ENCODE measurements at regions of chr10 and their contacts with region 1.

Region 1: DNA sequence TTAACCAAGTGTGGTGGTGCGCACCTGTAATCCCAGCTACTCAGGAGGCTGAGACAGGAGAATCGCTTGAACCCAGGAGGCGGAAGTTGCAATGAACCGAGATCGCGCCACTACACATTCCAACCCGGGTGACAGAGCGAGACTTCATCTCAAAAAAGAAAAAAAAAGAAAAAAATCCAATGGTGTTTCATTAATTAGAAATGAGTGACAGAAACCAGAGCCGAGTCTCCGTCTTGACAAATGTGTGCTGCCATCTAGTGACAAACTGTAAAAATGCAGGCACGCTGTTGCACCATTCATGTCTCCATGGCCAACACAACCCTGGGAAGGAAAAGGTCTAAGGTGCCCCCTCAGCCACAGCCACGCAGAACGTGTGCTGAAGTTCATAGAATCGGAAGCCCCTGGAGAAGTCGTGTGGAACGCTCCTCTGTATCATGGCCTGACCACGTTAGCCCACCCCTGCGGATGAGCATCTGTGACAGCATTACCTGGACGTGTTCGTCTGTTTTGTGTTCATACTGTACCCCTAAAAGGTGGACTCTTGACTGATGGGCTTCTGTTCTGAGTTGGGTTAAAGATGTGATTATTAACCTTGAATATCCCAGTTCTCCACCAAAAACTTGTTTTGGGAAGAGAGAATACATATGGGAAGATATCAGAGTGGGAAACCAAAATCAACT is 94.9 kb downstream of the LYZL2 start:
- DNase-seq: peak; percentile 87
- H3K4me3 ChIP-seq: no peak overlapping the region
- H3K27ac ChIP-seq: no peak overlapping the region
- H3K4me1 ChIP-seq: peaks cover 26% of the 10 kb centered on the region
- CTCF ChIP-seq: peak; percentile 90

Region 2: GRCh38 chr10:30392564-30392990 is 142.0 kb before region 1 on chr10:
- CTCF ChIA-PET with region 1: interaction called, 3 read pairs
- POLR2A ChIA-PET with region 1: interaction called, 5 read pairs
- intact Hi-C with region 1: loop called (anchors 1 kb)
- DNase-seq: peak; percentile 74
- H3K4me3 ChIP-seq: no peak overlapping the region
- H3K27ac ChIP-seq: no peak overlapping the region
- H3K4me1 ChIP-seq: no peaks in the 10 kb centered on the region
- CTCF ChIP-seq: peak; percentile 93

Region 3: GRCh38 chr10:30413996-30414576 is 120.5 kb before region 1 on chr10:
- CTCF ChIA-PET with region 1: interaction called, 4 read pairs
- POLR2A ChIA-PET with region 1: interaction called, 29 read pairs
- intact Hi-C with region 1: loop called (anchors 1 kb)
- DNase-seq: peak; percentile 79
- H3K4me3 ChIP-seq: no peak overlapping the region
- H3K27ac ChIP-seq: no peak overlapping the region
- H3K4me1 ChIP-seq: peaks cover 24% of the 10 kb centered on the region
- CTCF ChIP-seq: peak; percentile 90

Region 4: DNA sequence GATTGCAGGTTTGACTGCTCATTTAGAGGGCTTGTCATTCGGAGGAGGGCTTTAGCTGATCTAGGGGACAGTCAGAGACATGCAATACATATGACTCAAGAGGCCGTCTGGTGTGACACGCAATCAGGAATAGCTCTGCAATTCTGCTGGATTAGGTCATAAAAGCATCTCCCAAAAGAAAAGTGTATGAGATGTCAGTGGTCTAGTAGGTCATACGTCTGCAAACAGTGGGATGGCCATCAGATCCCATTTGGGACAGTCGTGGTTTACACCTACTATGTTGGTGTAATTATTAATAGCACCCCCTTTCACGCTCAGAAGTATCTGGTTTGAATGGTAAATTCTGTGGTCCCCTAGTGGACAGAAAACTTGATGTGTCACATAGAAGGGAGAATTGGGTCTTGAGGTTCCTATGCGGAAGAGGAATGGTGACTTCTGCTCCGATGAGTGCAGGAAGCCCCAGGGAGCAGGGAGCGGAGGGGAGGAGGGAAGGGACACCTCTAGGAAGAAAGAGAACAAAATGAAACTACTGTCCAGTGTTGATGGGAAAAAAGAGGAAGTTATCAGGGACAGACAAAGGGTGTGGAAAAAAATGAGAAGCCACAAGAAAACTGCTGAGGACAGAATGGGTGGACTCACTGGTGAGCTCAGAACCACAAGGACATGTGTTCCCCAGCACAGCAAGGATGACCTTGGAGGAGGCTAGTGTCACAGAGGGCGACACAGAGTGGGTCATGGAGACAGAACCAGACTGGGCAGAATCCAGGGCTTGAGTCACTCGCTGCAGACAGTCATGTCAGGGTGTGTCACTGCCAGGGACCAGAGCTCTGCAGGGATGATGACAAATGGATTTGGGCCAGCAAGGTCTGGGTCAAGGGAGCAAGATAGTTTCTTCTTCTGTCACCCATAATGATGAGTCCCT is 40.7 kb before region 1 on chr10:
- CTCF ChIA-PET with region 1: interaction called, 5 read pairs
- POLR2A ChIA-PET with region 1: interaction called, 8 read pairs
- intact Hi-C with region 1: loop called (anchors 5 kb)
- DNase-seq: peak; percentile 43
- H3K4me3 ChIP-seq: peak overlapping the region; percentile 8
- H3K27ac ChIP-seq: peak overlapping the region; percentile 27
- H3K4me1 ChIP-seq: peaks cover 78% of the 10 kb centered on the region
- CTCF ChIP-seq: peak; percentile 71

Region 5: DNA sequence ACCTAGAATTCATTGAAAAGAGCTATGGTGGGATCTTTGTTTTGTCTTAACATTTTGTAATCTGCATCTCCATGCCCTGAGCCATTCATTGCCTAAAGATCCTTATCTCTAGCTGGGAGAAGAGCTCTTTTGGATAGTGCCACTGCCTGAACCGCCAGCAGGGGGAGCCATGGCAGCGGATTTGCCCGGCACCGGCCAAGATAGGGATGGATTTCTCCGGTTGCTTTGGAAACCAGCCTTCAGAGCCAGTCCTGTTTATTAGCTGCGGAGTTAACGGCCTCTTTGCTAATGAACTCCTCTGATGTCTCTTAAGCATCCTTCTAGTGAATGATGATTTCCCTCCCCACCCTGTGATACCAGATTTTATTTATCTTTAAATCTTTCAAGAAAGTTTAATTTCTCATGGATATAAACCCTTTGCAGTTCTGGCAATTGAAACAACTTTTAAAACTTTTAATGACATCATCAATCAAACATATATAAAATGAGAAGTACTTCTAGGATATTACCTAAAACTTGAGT is 153.2 kb after region 1 on chr10:
- CTCF ChIA-PET with region 1: no interaction called
- POLR2A ChIA-PET with region 1: no interaction called
- intact Hi-C with region 1: no loop called
- DNase-seq: peak; percentile 81
- H3K4me3 ChIP-seq: no peak overlapping the region
- H3K27ac ChIP-seq: no peak overlapping the region
- H3K4me1 ChIP-seq: peaks cover 21% of the 10 kb centered on the region
- CTCF ChIP-seq: peak; percentile 99

Region 6: DNA sequence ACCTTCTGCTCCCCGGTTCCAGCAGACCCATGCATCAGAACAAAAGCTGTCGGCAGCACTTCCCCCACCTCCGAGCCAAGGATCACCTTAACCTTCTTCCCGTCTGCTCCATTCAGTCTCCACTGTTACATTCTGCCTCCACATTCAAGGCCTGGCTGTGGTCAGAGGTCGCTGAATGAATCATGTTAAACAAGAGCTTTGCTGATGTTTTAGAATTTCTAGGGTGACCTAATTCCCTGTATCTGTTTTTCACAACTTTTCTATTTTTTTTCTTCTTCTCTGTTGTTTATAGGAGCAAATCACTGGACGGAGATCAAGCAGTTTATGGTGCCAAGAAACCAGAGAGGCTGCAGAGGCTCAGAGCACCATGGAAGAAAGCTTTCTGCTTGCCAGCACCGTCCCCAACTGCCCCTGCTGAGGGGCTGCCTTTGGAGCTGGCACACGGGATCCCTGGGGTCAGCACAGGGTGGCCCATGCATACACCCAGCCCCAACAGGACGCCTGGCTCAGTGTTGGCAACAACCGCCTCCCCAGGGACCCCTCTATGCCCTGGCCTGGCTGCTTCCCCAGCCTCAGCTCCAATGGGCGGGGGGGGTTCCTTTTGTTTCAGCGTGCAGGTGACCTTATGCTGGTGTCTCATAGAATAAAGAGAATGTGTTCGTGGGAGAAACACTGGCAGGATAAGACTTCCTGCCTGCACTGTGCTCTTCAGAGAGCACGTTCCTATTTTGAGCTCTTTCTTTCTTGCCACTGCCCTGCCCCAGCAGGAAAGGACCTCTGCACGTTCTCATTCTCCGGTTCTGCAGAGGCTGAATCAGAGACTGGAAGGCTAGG is 277.6 kb after region 1 on chr10:
- CTCF ChIA-PET with region 1: no interaction called
- POLR2A ChIA-PET with region 1: no interaction called
- intact Hi-C with region 1: no loop called
- DNase-seq: no peak
- H3K4me3 ChIP-seq: no peak overlapping the region
- H3K27ac ChIP-seq: no peak overlapping the region
- H3K4me1 ChIP-seq: no peaks in the 10 kb centered on the region
- CTCF ChIP-seq: no peak